Panc1 (cell line): ENCODE measurements at regions of chr1 and their contacts with region 1.

Region 1: GRCh38 chr1:43763497-43763973 is 56.2 kb downstream of the ST3GAL3 start:
- DNase-seq: peak; percentile 82
- ATAC-seq: peak; percentile 98
- H3K4me3 ChIP-seq: no peak overlapping the region
- H3K27ac ChIP-seq: no peak overlapping the region; the same call in 1 of the 2 replicates
- H3K4me1 ChIP-seq: peaks cover 16% of the 10 kb centered on the region; the same call in 1 of the 2 replicates
- H3K27me3 ChIP-seq: no peaks in the 10 kb centered on the region
- CTCF ChIP-seq: peak; percentile 89

Region 2: DNA sequence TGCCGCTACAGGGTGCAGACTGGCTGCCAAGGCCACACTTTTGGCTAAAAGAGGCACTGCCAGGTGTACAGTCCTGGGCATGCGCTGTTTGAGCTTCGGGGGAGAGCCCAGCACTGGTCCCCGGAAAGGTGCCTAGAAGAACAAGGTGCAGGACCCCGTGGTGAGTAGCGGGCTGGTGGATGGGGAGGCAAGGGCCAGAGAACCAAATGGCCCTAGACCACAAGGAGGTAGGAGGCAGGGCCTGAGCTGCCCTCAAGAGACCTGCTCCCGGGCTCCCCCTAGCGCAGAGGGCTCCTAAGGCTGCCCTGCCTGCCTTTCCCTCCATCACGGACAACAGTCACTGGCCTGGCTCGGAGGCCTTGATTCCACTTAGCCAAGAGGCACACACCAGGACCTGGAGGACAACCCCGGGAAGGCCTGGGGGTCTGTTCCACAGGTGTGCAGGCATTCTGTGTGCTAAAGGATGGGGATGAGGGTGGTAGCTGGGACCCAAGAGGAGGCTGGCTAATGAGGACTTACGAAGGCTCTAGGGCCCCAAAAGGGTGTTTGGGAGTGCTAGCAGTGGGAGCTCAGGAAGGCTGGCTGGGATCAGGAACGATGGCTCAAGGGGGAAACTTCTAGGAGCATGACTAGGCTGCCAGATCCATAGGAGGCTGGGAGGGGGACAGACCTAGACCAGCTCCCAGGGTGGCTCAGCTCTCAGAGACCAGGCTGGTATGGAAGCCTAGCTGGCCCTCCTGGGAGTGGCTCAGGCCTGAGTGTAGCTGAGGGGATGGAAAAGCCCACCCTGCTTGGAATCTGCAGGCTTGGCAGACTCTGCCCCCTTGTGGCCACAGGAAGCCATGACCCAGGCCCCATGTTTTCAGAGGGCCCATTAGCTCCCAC is 170.8 kb after region 1 on chr1:
- CTCF ChIA-PET with region 1: interaction called, 84 read pairs
- POLR2A ChIA-PET with region 1: interaction called, 3 read pairs
- in situ Hi-C with region 1: loop called (anchors 25 kb)
- intact Hi-C with region 1: loop called (anchors 2 kb)
- DNase-seq: no peak
- ATAC-seq: peak; percentile 59
- H3K4me3 ChIP-seq: no peak overlapping the region
- H3K27ac ChIP-seq: peak overlapping the region; percentile 40; the same call in 1 of the 2 replicates
- H3K4me1 ChIP-seq: peaks cover 16% of the 10 kb centered on the region
- H3K27me3 ChIP-seq: no peaks in the 10 kb centered on the region
- CTCF ChIP-seq: peak; percentile 93

Region 3: DNA sequence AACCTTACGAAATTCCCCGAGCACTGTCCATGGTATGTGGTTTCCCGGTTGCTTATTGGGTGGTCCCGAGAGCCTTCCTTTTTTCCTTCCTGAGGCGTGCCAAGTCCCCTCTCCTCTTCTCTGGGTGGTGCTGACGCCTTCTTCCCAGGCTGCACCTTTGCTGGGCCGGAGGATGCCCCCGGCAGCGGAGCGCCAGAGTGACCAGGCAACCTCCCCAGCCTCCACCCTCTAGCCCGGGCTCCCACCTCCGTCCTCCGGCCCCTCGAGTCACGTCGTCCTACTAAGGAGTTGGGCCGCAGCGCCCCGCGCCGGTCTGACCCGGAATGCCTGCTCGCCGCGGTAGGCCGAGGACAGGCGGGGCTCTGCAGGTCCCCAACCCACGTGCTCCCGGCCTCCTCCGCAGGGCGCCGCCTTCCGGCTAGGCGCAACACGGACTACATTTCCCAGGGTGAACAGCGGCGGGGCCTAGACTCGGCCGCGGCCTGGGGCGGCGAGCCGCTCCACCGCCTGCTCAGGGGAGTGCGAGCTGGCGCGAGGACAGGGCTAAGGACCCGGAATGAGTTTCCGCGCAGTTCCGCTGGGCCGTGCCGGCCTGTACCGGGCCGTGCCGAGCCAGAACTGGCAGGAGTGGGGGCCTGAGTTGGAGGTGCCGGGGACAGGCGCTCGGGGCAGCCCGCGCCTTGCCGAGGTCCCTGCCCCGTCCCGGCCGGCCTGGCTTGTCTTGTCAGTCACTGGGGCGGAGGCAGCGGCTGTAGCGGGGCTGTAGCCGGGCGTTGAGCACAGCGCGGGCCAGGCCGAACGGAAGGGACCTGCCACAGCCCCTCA is 182.9 kb after region 1 on chr1 and contains the start of gene IPO13:
- CTCF ChIA-PET with region 1: interaction called, 10 read pairs
- POLR2A ChIA-PET with region 1: no interaction called
- in situ Hi-C with region 1: loop called (anchors 25 kb)
- intact Hi-C with region 1: no loop called
- DNase-seq: peak; percentile 83
- ATAC-seq: peak; percentile 98
- H3K4me3 ChIP-seq: peak within 1 kb of the TSS; percentile 79 to 88
- H3K27ac ChIP-seq: peak within 1 kb of the TSS; percentile 96
- H3K4me1 ChIP-seq: peaks cover 16% of the 10 kb centered on the region
- H3K27me3 ChIP-seq: no peaks in the 10 kb centered on the region
- CTCF ChIP-seq: peak; percentile 86
- total RNA-seq, gene IPO13: 40.0 TPM